ENCODE measurements at regions of chr7 and their contacts with region 1.

Region 1: GRCh38 chr7:102061981-102062390 is 224.7 kb upstream of the SH2B2 start:
- DNase-seq: no peak
- H3K4me3 ChIP-seq: no peak overlapping the region
- H3K27ac ChIP-seq: no peak overlapping the region
- H3K4me1 ChIP-seq: peaks cover 23% of the 10 kb centered on the region
- H3K27me3 ChIP-seq: no peaks in the 10 kb centered on the region
- CTCF ChIP-seq: no peak

Region 2: GRCh38 chr7:101764221-101764620 is 297.8 kb before region 1 on chr7:
- CTCF ChIA-PET with region 1: no interaction called
- dilution Hi-C with region 1: no loop called
- in situ Hi-C with region 1: no loop called
- intact Hi-C with region 1: no loop called
- DNase-seq: no peak
- H3K4me3 ChIP-seq: no peak overlapping the region
- H3K27ac ChIP-seq: no peak overlapping the region
- H3K4me1 ChIP-seq: peaks cover 9% of the 10 kb centered on the region
- H3K27me3 ChIP-seq: no peaks in the 10 kb centered on the region
- CTCF ChIP-seq: no peak

Region 3: GRCh38 chr7:102101032-102101551 is 39.1 kb after region 1 on chr7:
- CTCF ChIA-PET with region 1: no interaction called
- dilution Hi-C with region 1: no loop called
- in situ Hi-C with region 1: no loop called
- intact Hi-C with region 1: loop called (anchors 2 kb)
- DNase-seq: peak; percentile 37
- H3K4me3 ChIP-seq: no peak overlapping the region
- H3K27ac ChIP-seq: no peak overlapping the region
- H3K4me1 ChIP-seq: no peaks in the 10 kb centered on the region
- H3K27me3 ChIP-seq: no peaks in the 10 kb centered on the region
- CTCF ChIP-seq: no peak

Region 4: DNA sequence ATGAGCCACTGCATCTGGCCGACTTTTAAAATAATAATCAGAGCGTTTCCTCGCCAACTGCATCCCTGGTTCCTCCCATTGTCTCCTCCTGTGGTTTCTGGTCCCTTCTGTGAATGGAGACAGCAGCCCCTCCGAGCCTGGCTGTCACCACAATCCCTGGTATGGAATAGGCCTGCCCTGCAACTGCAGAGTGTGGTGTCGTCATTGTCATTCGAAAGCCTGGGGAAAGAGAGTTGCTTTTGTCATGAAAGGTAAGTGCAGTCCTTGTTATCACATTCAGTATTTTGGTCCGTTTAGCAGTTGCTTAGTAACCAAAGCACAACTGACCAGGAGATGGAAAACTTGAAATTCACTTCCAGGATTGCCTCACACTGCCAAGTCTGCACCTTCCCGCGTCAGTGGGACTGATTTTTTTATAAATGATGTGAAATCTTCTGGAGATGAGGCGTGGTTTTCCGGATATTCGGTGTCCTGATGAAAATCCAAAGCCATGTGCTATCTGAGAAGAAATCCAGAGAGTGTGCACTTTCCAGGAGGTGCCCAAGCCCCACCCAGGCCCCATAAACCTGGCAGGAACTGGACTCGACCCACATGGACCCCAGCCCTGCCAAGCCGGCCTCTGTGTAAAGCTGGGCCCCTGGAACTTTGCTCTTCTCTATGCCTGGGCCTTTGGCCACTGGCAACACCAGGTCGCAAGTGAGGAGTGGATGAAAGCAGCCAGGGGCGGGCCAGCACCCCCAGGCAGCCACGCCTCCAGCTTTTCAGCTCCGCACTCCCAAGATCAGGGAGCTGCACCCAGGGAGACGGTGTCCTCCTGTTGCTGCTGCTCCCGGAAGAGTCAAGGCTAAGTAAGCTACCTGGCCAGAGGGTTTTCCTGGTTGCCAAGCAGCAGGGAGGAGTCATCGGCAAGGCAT is 90.9 kb after region 1 on chr7:
- CTCF ChIA-PET with region 1: no interaction called
- dilution Hi-C with region 1: no loop called
- in situ Hi-C with region 1: no loop called
- intact Hi-C with region 1: loop called (anchors 1 kb)
- DNase-seq: peak; percentile 42
- H3K4me3 ChIP-seq: no peak overlapping the region
- H3K27ac ChIP-seq: no peak overlapping the region
- H3K4me1 ChIP-seq: peaks cover 11% of the 10 kb centered on the region
- H3K27me3 ChIP-seq: no peaks in the 10 kb centered on the region
- CTCF ChIP-seq: no peak

Measured in mammary epithelial cell (primary cell).